Activated CD4-positive, alpha-beta memory T cell treated with anti-CD3 and anti-CD28 coated beads for 36 hours (primary cell): ENCODE measurements at regions of chr4 and their contacts with region 1.

Region 1: GRCh38 chr4:4714331-4714730 is 145.1 kb upstream of the MSX1 start:
- DNase-seq: no peak
- H3K4me3 Mint-ChIP-seq: no peak overlapping the region
- H3K27ac Mint-ChIP-seq: no peak overlapping the region
- H3K4me1 Mint-ChIP-seq: no peaks in the 10 kb centered on the region
- H3K27me3 Mint-ChIP-seq: no peaks in the 10 kb centered on the region

Region 2: DNA sequence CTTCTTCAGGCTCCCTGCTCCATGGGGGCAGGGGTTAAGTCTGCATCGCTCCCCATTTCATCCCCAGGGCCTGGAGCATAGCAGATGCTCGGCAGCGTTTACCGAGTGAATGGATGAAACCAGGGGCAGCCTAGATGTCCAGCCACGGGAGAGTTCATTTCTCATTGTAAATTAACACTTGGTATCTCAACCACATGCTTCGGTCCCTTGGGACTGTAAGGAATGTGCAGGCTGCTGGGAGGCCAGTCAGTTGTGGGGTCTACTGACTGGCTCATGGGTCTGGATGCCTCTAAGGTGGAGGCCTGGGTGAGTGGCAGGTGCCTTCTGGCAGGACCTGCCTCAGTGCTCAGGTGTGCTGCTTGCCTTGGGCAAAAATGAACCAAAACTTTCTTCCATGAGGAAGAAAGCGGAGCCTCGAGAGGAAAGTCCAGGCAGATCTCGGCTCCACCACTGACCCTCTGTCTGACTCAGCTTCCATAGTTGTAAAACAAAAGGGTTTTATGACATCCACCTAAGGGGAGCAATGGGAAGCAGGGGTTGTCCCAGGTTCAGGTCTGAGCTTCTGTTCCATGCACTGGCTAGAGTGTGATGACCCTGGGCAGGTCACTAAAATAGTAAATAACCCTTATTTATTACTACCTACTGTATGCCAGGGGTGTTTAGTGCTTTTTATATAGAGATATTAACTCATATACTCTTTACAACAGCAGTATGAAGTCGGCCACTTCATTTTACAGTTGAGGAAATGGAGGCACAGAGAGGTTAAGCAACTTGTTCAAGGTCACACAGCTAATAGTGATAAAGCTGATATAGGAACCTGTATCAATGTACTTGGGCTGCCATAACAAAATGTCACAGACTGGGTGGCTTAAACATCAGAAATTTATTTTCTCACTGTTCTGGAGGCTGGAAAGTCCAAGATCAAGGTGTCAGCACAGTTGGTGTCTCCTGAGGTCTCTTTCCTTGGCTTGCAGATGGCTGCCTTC is 28.2 kb before region 1 on chr4:
- CTCF ChIA-PET with region 1: no interaction called
- POLR2A ChIA-PET with region 1: no interaction called
- intact Hi-C with region 1: no loop called
- DNase-seq: no peak
- H3K4me3 Mint-ChIP-seq: no peak overlapping the region
- H3K27ac Mint-ChIP-seq: no peak overlapping the region
- H3K4me1 Mint-ChIP-seq: peaks cover 11% of the 10 kb centered on the region
- H3K27me3 Mint-ChIP-seq: no peaks in the 10 kb centered on the region

Region 3: GRCh38 chr4:6509587-6509986 is 1795.3 kb after region 1 on chr4:
- CTCF ChIA-PET with region 1: no interaction called
- POLR2A ChIA-PET with region 1: no interaction called
- intact Hi-C with region 1: loop called (anchors 10 kb)
- DNase-seq: no peak
- H3K4me3 Mint-ChIP-seq: no peak overlapping the region
- H3K27ac Mint-ChIP-seq: no peak overlapping the region
- H3K4me1 Mint-ChIP-seq: no peaks in the 10 kb centered on the region
- H3K27me3 Mint-ChIP-seq: no peaks in the 10 kb centered on the region